Tibial artery (tissue), 4 donors: ENCODE measurements at regions of chr6 and their contacts with region 1.

Region 1: GRCh38 chr6:21593412-21593926 is at the start of gene SOX4:
- DNase-seq: peak; percentile 93
- H3K4me3 ChIP-seq: peak within 1 kb of the TSS; percentile 78 to 88
- H3K27ac ChIP-seq: peak within 1 kb of the TSS; percentile 80 to 88
- H3K4me1 ChIP-seq: peaks cover 0 to 13% (median 7%) of the 10 kb centered on the region in 4 donors
- H3K27me3 ChIP-seq: no peaks in the 10 kb centered on the region
- CTCF ChIP-seq: no peak

Region 2: DNA sequence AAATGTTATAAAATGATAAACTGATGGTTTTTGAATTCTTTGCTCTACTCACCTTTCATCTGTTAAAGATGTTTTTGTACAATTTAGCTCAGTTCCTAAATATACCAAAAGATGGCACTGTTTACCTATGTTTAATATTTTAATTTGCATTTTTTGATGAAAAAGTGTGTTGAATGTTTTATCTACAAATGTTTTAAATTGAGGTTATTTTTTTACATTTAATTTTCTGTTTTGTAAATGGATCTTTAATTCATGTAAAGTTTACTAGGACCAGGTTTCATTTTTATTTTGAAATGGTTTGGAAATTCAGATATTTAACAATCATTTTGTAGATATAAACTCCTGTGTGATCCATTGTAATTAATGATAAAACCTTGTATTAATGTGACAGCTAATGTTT is 1029.2 kb before region 1 on chr6:
- intact Hi-C with region 1: loop called (anchors 5 kb)
- DNase-seq: no peak
- H3K4me3 ChIP-seq: no peak overlapping the region
- H3K27ac ChIP-seq: no peak overlapping the region
- H3K4me1 ChIP-seq: no peaks in the 10 kb centered on the region
- H3K27me3 ChIP-seq: no peaks in the 10 kb centered on the region
- CTCF ChIP-seq: peak; percentile 53 to 59

Region 3: DNA sequence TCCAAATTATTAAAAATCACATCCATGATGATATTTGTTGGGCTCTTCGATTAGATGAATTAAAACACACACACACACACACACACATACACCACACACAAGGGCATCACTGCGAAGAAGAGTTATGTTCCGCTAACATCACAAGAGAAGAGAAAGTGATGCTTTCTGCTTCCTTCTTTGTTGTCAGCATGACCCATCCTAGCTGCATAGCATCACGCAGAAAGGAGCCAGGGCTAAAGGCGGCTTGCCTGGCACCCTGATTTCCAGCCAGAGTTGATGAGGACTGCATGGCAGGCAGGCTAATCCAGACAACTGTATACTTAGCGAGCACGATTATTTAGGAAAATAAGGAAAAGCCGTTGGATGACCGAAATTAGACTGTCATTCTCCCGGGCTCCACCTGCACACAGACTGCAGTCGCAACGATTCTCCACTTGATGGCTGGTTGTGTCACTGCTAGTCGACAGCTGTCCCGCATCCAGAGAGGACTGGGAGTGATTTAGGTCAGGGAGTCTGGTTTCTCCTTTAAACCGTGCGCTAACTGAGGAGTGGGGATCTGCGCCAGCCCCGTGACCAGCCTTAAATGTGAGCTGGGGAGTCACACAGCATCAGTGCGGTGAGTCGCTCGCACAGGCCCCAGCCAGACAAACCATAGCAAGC is 70.5 kb before region 1 on chr6:
- intact Hi-C with region 1: no loop called
- DNase-seq: no peak
- H3K4me3 ChIP-seq: no peak overlapping the region
- H3K27ac ChIP-seq: no peak overlapping the region
- H3K4me1 ChIP-seq: no peaks in the 10 kb centered on the region
- H3K27me3 ChIP-seq: peaks cover 0 to 3% of the 10 kb centered on the region in 2 donors
- CTCF ChIP-seq: no peak

Region 4: DNA sequence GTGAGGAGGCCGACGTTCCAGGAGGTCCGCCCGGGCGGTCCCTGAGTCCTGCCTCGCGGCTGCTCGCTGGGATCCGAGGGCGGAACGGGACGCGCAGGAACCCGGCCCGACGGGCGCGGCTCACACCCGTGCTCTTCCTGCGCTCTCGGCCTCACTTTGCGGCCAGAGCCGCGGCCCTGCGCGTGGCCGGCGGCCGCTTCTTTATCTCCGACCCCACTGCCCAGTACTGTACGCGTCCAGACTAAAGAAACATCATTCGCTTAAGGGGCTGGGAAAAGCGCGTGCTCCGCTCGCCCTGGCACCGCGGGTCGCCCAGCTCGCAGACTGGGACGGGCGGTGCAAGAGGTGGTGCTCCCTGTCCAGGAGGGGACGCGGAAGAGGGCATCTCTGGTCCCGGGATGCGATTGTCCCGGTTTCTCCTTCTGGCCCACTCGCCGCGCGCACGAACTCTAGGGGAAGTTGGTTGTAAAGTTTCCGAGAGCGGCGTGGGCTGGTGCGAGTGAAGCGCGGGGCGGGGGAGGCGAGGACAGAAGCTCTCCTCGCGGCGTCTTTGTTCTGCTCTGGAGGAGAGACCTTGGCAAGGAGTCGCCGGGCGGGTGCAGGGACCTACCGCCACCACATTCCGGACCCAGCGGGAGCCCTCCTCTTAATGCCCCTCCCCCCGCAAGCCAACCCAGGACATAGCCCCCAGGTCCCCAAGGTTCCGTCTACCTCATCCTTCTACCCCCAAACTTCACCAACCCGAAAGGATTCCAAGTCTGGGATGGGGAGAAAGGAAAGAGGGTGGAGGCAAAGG is 71.0 kb after region 1 on chr6:
- intact Hi-C with region 1: loop called (anchors 10 kb)
- DNase-seq: peak in 1 of 2 donors; percentile 29
- H3K4me3 ChIP-seq: peak overlapping the region; percentile 47 to 60
- H3K27ac ChIP-seq: no peak overlapping the region
- H3K4me1 ChIP-seq: peaks cover 0 to 31% (median 22%) of the 10 kb centered on the region in 4 donors
- H3K27me3 ChIP-seq: peaks cover 0 to 52% of the 10 kb centered on the region in 2 donors
- CTCF ChIP-seq: no peak

Region 5: GRCh38 chr6:22145823-22146677 is 552.6 kb after region 1 on chr6:
- intact Hi-C with region 1: loop called (anchors 5 kb)
- DNase-seq: no peak
- H3K4me3 ChIP-seq: peak overlapping the region; percentile 14 to 31
- H3K27ac ChIP-seq: no peak overlapping the region
- H3K4me1 ChIP-seq: peaks cover 0 to 36% (median 27%) of the 10 kb centered on the region in 4 donors
- H3K27me3 ChIP-seq: no peaks in the 10 kb centered on the region
- CTCF ChIP-seq: peak in 1 of 2 experiments; percentile 22